ENCODE measurements at regions of chr1 and their contacts with region 1.

Region 1: GRCh38 chr1:41573785-41574713 is 89.6 kb upstream of the EDN2 start:
- DNase-seq: peak; percentile 74 to 90 (median 85)
- H3K4me3 ChIP-seq: peak overlapping the region in 1 of 59 donors; percentile 0
- H3K27ac ChIP-seq: peak overlapping the region in 9 of 59 donors; percentile 17 to 66 (median 41)
- H3K27me3 ChIP-seq: no peaks in the 10 kb centered on the region
- CTCF ChIP-seq: peak; percentile 50 to 97 (median 91)

Region 2: DNA sequence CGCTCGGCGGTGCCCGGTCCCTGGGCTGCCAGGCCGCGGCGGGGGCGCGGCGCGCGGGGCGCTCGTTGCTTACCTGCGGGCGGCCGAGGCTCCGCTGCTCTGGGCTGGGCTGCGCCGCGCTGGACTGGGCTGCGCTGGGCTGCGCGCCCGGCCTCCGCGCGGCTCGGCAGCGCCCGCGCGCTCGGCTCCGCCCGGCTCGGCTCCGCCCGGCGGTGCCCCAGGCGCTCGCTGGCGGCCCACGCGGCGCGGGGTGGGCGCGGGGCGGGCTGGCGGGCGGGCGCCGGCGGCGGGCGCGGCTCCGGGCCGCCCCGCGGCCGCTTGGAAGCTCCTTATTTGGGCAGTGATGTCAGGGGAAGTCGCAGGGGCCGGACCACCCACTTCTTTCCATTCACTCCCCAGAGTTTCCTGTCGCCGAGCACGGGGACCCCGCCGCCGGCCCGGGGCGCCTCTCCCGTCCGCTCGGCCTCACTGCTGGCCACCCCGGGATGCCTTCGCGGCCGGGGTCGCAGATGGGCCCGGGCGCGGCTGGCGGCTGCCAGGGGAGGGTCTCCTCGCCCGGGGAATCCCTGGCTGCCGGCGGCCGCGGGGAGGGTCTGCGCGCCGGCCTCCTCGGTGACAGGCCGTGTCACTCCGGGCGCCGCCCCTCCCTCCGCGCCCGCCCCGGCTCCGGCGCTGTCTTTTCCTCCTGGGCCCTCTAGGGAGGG is 88.2 kb after region 1 on chr1:
- intact Hi-C with region 1: loop called in 1 of 2 experiments (anchors 5 kb)
- DNase-seq: peak in 8 of 10 donors; percentile 37 to 79 (median 66)
- H3K4me3 ChIP-seq: peak overlapping the region; percentile 49 to 83 (median 73)
- H3K27ac ChIP-seq: peak overlapping the region in 57 of 59 donors; percentile 39 to 92 (median 82)
- H3K27me3 ChIP-seq: no peaks in the 10 kb centered on the region
- CTCF ChIP-seq: no peak

Region 3: GRCh38 chr1:41795205-41795762 is 221.2 kb after region 1 on chr1:
- intact Hi-C with region 1: loop called (anchors 5 kb)
- DNase-seq: no peak
- H3K4me3 ChIP-seq: no peak overlapping the region
- H3K27ac ChIP-seq: no peak overlapping the region
- H3K27me3 ChIP-seq: no peaks in the 10 kb centered on the region
- CTCF ChIP-seq: peak in 42 of 56 donors; percentile 19 to 62 (median 40)

Region 4: DNA sequence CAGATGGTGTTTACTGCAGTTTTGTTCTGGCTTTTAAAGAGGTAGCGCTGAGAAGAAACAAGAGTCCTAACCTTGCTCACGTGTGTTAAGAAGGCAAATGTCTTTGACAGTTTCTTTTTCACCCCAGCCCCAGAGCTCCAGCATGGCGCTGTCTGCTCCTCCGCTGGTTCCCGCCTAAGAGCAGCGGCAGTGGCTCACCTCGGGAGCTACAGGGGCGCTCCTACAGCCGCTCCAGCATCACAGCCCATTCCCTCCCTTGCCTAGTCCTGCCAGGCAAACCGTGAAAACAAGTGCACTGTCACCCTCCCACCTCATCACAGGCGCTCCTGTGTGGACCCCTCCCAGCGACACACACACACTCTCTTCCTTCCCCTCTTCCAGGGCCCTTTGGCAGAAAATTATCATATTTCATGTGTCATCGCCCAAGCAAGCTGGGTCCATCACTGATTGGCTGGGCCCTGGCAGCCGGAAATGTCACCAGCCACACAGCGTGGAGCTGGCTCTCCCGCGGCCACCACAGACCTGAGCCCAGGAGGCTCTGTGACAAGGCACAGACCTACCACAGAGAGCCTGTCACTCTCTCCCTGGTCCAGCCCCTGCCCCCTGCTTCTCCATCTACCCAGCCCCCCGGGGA is 345.8 kb after region 1 on chr1:
- intact Hi-C with region 1: loop called in 1 of 2 experiments (anchors 10 kb)
- DNase-seq: peak; percentile 43 to 90 (median 78)
- H3K4me3 ChIP-seq: peak overlapping the region in 56 of 59 donors; percentile 5 to 89 (median 72)
- H3K27ac ChIP-seq: peak overlapping the region in 39 of 59 donors; percentile 9 to 90 (median 72)
- H3K27me3 ChIP-seq: no peaks in the 10 kb centered on the region
- CTCF ChIP-seq: no peak

Region 5: GRCh38 chr1:42173155-42173933 is 599.3 kb after region 1 on chr1:
- intact Hi-C with region 1: loop called in 1 of 2 experiments (anchors 10 kb)
- DNase-seq: peak in 9 of 10 donors; percentile 57 to 79 (median 71)
- H3K4me3 ChIP-seq: peak overlapping the region in 1 of 59 donors; percentile 0
- H3K27ac ChIP-seq: peak overlapping the region in 36 of 59 donors; percentile 0 to 64 (median 30)
- H3K27me3 ChIP-seq: no peaks in the 10 kb centered on the region
- CTCF ChIP-seq: peak; percentile 76 to 99 (median 95)

Measured in dorsolateral prefrontal cortex (tissue), 120 donors.